Sigmoid colon (tissue), 7 donors: ENCODE measurements at regions of chr2 and their contacts with region 1.

Region 1: DNA sequence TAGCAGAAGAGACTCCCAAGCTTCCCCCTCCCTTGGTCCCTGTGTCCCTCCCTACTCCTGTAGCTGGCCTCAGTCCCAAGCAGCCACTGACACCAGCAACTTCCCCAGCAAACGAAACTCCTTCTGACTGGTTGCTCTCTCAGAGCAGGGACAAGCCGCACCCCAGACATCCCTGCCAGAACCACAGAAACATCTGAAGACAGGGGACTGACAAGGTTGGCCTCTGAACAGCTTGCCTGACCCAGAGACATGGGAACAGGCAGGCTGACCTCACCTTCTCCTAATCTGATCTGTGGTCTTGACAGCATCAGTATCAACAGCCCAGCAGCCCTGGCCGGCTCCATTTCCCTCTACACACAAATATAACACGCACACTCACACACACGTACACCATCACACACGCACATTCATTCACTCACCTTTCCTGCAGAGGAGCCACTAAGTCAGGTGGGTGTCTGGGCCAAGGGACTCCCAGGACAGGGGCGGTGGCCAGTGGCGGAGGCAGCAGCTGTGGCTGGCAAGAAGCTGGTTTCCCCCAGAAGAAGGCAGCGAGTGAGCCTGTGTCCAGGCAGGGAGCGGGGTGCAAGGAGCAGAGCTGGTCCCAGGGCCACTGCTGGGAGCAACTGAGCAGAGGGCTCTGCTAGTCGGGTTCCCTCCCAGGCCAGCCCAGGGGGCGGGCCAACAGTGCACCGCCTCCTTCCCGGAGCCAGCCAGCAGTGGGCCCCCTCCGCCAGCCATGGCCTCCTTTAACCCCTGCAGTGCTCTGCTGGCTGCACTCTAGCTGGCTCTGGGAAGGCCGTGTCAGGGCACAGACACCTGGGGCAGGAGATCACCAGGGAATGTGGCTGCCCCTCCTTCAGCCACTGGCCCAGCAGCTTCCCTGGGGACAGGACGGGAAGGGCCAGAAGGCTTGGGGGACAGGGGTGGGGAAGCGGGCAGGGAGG is 59.1 kb downstream of the TNS1 start:
- DNase-seq: peak; percentile 96
- H3K4me3 ChIP-seq: peak overlapping the region; percentile 56 to 85 (median 80)
- H3K27ac ChIP-seq: peak overlapping the region; percentile 94 to 98 (median 98)
- H3K4me1 ChIP-seq: peaks cover 0 to 90% (median 60%) of the 10 kb centered on the region in 4 donors
- H3K27me3 ChIP-seq: no peaks in the 10 kb centered on the region
- CTCF ChIP-seq: peak in 2 of 4 experiments; percentile 7 to 25
- EP300 ChIP-seq: no peak
- POLR2A ChIP-seq: peak; percentile 95 to 99

Region 2: DNA sequence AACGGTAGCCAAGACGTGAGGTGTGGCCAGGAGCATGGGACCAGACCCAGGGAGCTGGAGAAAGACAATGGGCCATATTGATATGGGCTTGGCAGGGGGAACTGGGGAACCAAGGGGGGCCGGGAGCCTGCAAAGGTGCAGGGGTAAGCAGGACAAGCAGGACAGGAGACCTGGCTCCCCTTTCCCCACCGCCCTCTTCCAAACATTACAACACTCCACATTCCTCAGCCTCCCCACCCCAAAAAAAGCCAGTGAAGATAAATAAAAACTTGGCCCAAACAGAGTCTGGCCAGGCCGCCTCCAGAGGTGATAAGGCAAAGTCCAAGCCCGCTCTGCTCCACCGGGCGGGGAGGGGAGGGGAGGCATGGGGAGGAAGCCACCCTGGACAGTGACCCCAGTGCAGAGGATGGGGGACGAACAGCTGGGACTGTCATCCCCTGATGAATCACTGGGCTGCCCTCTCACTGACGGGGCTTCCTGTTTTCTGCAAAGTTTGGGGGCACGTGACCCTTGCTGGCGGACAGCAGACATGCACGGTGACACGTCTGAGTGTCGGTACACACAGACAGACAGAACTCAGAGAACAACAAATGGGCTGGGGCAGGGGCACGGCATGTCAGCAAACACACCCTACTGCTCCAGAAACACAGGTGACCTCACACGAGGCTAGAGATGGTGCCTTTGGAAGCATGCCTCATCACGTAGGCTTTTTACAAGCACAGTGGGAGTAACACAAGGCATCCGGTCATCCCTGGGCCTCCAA is 41.2 kb before region 1 on chr2:
- intact Hi-C with region 1: loop called (anchors 2 kb)
- DNase-seq: peak; percentile 95
- H3K4me3 ChIP-seq: peak overlapping the region in 1 of 4 donors; percentile 16
- H3K27ac ChIP-seq: peak overlapping the region; percentile 94 to 98 (median 98)
- H3K4me1 ChIP-seq: peaks cover 0 to 100% (median 100%) of the 10 kb centered on the region in 4 donors
- H3K27me3 ChIP-seq: no peaks in the 10 kb centered on the region
- CTCF ChIP-seq: no peak
- EP300 ChIP-seq: peak in 2 of 4 donors; percentile 37 to 73
- POLR2A ChIP-seq: no peak

Region 3: GRCh38 chr2:217988014-217988839 is 44.5 kb after region 1 on chr2:
- intact Hi-C with region 1: loop called (anchors 2 kb)
- DNase-seq: peak; percentile 93
- H3K4me3 ChIP-seq: peak overlapping the region in 2 of 4 donors; percentile 11 to 17
- H3K27ac ChIP-seq: peak overlapping the region; percentile 67 to 81 (median 73)
- H3K4me1 ChIP-seq: peaks cover 0 to 25% (median 17%) of the 10 kb centered on the region in 4 donors
- H3K27me3 ChIP-seq: no peaks in the 10 kb centered on the region
- CTCF ChIP-seq: peak; percentile 84 to 96 (median 92)
- EP300 ChIP-seq: no peak
- POLR2A ChIP-seq: no peak